Psoas muscle (tissue), 8 donors: ENCODE measurements at regions of chr20 and their contacts with region 1.

Region 1: GRCh38 chr20:44576297-44576696 is 6.1 kb upstream of the PKIG start:
- DNase-seq: no peak
- ATAC-seq: peak in 1 of 4 donors; percentile 0
- H3K4me3 ChIP-seq: no peak overlapping the region
- H3K27ac ChIP-seq: peak overlapping the region; percentile 96
- H3K4me1 ChIP-seq: peaks cover 70% of the 10 kb centered on the region
- H3K27me3 ChIP-seq: no peaks in the 10 kb centered on the region
- CTCF ChIP-seq: peak; percentile 46

Region 2: GRCh38 chr20:44495802-44496481 is 80.4 kb before region 1 on chr20:
- intact Hi-C with region 1: no loop called
- DNase-seq: no peak
- ATAC-seq: peak; percentile 75 to 78 (median 77)
- H3K4me3 ChIP-seq: no peak overlapping the region
- H3K27ac ChIP-seq: peak overlapping the region; percentile 79
- H3K4me1 ChIP-seq: peaks cover 41% of the 10 kb centered on the region
- H3K27me3 ChIP-seq: no peaks in the 10 kb centered on the region
- CTCF ChIP-seq: no peak

Region 3: DNA sequence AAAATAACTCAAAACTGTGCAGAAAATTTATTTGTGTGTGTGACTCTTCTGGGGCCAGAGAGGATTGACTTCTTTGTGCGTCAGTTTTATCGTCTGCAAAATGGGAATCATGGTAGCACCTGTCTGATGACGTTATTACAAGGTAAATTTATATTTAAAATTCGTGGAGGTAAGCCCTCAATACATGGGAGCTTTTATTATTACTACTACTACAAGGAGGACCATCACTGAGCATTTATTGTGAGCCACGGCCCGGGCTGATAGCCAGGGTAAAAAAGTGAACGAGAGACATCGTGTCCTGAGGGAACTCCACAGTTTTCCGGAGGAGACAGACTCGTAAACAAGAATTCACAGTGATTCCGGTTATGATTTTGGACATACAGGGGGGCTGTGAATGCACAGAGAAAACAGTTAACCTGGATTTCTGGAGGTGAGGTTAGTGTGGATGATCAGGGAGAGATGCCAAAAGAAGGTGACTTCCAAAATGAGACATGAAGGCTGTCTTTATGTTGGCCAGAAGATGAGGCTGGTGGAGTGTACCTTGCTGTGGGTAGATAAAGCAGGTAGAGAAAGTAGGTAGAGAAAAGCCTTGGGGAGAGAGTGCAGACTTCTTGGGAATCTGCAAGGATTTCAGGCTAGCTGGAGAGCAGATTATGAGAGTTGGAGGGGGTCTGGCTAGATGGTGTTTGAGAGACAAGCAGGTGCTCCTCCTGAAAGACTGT is 43.9 kb before region 1 on chr20:
- intact Hi-C with region 1: loop called in 1 of 2 experiments (anchors 5 kb)
- DNase-seq: no peak
- ATAC-seq: peak in 2 of 4 donors; percentile 13 to 21
- H3K4me3 ChIP-seq: peak overlapping the region; percentile 88
- H3K27ac ChIP-seq: peak overlapping the region; percentile 79
- H3K4me1 ChIP-seq: peaks cover 2% of the 10 kb centered on the region
- H3K27me3 ChIP-seq: no peaks in the 10 kb centered on the region
- CTCF ChIP-seq: no peak

Region 4: DNA sequence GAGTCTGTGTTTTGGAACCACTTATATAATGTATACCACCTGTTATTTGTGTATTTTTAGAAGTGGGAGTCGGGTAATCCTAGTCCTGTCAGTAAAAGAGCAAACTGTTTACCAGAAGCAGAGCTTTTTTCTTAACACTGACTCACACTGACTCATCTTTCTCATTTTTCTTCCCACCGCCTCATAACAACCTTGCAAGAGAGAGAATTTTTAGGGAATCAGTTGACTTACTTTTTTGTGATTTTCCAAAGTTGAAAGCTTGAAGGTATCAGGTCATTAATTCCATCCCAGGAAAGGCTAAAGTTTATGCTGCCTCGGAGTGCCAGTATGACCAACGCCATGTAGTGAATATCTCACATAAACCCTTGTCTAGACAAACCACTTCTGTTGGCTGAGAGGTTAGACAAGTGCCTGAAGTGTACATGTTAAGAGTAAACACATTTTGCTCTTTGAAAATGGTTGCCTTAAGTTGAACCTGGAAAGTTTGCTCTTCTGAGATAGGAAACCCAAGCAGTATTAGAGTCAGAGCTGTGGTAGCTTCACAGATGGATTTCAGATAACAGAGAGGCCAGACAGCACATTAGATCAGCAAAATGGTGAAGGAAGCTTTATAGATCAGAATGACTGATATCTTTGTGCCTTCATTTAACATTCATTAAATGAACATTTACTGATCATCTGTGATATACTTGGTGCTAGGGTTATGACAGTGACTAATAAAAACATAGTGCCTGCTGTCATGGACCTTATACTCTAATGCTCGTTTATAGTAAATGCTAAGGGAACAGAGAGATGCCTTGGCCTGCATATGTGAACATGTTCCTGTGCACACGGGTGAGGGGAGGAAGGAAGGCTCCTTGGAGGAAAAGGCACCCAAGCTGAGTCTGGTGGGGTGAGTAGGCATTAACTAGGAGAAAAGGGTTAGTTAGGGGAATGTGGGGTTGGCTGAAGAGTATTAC is 23.1 kb before region 1 on chr20:
- intact Hi-C with region 1: loop called in 1 of 2 experiments (anchors 1 kb)
- DNase-seq: no peak
- ATAC-seq: peak; percentile 80 to 91 (median 88)
- H3K4me3 ChIP-seq: peak overlapping the region; percentile 44
- H3K27ac ChIP-seq: peak overlapping the region; percentile 95
- H3K4me1 ChIP-seq: peaks cover 48% of the 10 kb centered on the region
- H3K27me3 ChIP-seq: no peaks in the 10 kb centered on the region
- CTCF ChIP-seq: no peak

Region 5: DNA sequence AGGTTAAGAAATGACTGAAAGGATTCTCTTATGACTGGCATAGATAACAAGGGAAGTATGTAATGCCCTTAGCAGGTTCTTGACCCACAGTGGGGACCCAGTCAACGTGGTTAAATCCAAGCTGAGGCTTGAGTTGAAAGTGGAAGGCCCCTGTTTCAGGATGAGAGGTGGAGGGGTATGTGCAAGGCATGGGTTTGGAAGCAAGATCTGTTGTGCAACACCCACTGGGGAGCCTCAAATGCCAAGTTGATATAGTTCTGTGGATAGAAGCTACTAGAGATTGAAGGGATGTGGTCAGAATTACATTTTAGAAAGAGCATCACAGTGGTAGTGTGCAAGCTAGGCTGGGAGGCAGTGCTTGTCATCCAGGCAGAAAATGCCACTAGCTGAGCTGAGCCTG is 338.6 kb after region 1 on chr20:
- intact Hi-C with region 1: no loop called
- DNase-seq: no peak
- ATAC-seq: no peak
- H3K4me3 ChIP-seq: no peak overlapping the region
- H3K27ac ChIP-seq: no peak overlapping the region
- H3K4me1 ChIP-seq: peaks cover 3% of the 10 kb centered on the region
- H3K27me3 ChIP-seq: no peaks in the 10 kb centered on the region
- CTCF ChIP-seq: no peak